Activated CD4-positive, alpha-beta T cell treated with anti-CD3 and anti-CD28 coated beads for 36 hours (primary cell): ENCODE measurements at regions of chr2 and their contacts with region 1.

Region 1: DNA sequence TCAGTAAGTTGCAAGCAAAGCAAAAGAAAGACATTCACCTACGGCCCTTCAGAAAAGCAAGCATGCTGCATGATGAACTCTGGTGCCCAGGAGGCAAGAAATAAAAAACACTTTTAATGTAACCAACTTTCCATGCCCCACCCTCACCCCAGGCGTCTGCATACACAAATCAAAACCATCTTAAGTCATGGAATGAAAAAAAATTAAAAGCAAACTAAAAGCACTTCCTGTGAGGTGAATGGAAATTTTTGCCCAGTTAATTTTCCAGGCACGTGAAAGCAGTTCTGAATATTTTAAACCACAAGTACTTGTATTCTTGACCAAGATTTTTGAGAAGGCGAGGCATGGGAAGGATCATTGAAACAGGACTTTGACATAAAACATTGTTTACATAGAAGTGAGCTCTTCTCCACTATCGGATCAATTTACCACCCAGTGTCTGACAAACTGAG is 2.5 kb upstream of the ICOS start:
- DNase-seq: peak; percentile 78
- ATAC-seq: peak; percentile 47
- H3K4me3 Mint-ChIP-seq: peak overlapping the region; percentile 69
- H3K27ac Mint-ChIP-seq: peak overlapping the region; percentile 96
- H3K4me1 Mint-ChIP-seq: peaks cover 61% of the 10 kb centered on the region
- H3K27me3 Mint-ChIP-seq: no peaks in the 10 kb centered on the region

Region 2: GRCh38 chr2:202278944-202279343 is 1655.1 kb before region 1 on chr2:
- CTCF ChIA-PET with region 1: no interaction called
- POLR2A ChIA-PET with region 1: no interaction called
- intact Hi-C with region 1: loop called in 1 of 2 experiments (anchors 10 kb)
- DNase-seq: no peak
- ATAC-seq: no peak
- H3K4me3 Mint-ChIP-seq: no peak overlapping the region
- H3K27ac Mint-ChIP-seq: peak overlapping the region; percentile 84
- H3K4me1 Mint-ChIP-seq: peaks cover 46% of the 10 kb centered on the region
- H3K27me3 Mint-ChIP-seq: no peaks in the 10 kb centered on the region

Region 3: GRCh38 chr2:203893401-203893800 is 40.7 kb before region 1 on chr2:
- CTCF ChIA-PET with region 1: interaction called, 3 read pairs
- POLR2A ChIA-PET with region 1: interaction called, 5 read pairs
- intact Hi-C with region 1: loop called in 1 of 2 experiments (anchors 1 kb)
- DNase-seq: no peak
- ATAC-seq: no peak
- H3K4me3 Mint-ChIP-seq: peak overlapping the region; percentile 23
- H3K27ac Mint-ChIP-seq: peak overlapping the region; percentile 85
- H3K4me1 Mint-ChIP-seq: peaks cover 78% of the 10 kb centered on the region
- H3K27me3 Mint-ChIP-seq: peaks cover 2% of the 10 kb centered on the region

Region 4: GRCh38 chr2:203989521-203989920 is 55.5 kb after region 1 on chr2:
- CTCF ChIA-PET with region 1: no interaction called
- POLR2A ChIA-PET with region 1: interaction called, 3 read pairs
- intact Hi-C with region 1: loop called in 1 of 2 experiments (anchors 1 kb)
- DNase-seq: no peak
- ATAC-seq: no peak
- H3K4me3 Mint-ChIP-seq: no peak overlapping the region
- H3K27ac Mint-ChIP-seq: peak overlapping the region; percentile 87
- H3K4me1 Mint-ChIP-seq: peaks cover 8% of the 10 kb centered on the region
- H3K27me3 Mint-ChIP-seq: no peaks in the 10 kb centered on the region

Region 5: GRCh38 chr2:204010628-204011560 is 76.8 kb after region 1 on chr2:
- CTCF ChIA-PET with region 1: interaction called, 4 read pairs
- POLR2A ChIA-PET with region 1: interaction called, 8 read pairs
- intact Hi-C with region 1: loop called in 1 of 2 experiments (anchors 1 kb)
- DNase-seq: peak; percentile 31
- ATAC-seq: peak; percentile 42
- H3K4me3 Mint-ChIP-seq: peak overlapping the region; percentile 34
- H3K27ac Mint-ChIP-seq: peak overlapping the region; percentile 72
- H3K4me1 Mint-ChIP-seq: peaks cover 84% of the 10 kb centered on the region
- H3K27me3 Mint-ChIP-seq: no peaks in the 10 kb centered on the region

Region 6: GRCh38 chr2:204468746-204469429 is 534.8 kb after region 1 on chr2:
- CTCF ChIA-PET with region 1: no interaction called
- POLR2A ChIA-PET with region 1: no interaction called
- intact Hi-C with region 1: no loop called
- DNase-seq: no peak
- ATAC-seq: no peak
- H3K4me3 Mint-ChIP-seq: no peak overlapping the region
- H3K27ac Mint-ChIP-seq: no peak overlapping the region
- H3K4me1 Mint-ChIP-seq: no peaks in the 10 kb centered on the region
- H3K27me3 Mint-ChIP-seq: peaks cover 14% of the 10 kb centered on the region